Endothelial cell of umbilical vein (primary cell): ENCODE measurements at regions of chr9 and their contacts with region 1.

Region 1: GRCh38 chr9:38017149-38017884 is 51.7 kb downstream of the SHB start:
- DNase-seq: no peak
- H3K4me3 ChIP-seq: no peak overlapping the region
- H3K27ac ChIP-seq: peak overlapping the region; percentile 34
- H3K4me1 ChIP-seq: peaks cover 57% of the 10 kb centered on the region
- H3K27me3 ChIP-seq: no peaks in the 10 kb centered on the region
- CTCF ChIP-seq: peak in 1 of 2 donors; percentile 11
- POLR2A ChIP-seq: no peak

Region 2: DNA sequence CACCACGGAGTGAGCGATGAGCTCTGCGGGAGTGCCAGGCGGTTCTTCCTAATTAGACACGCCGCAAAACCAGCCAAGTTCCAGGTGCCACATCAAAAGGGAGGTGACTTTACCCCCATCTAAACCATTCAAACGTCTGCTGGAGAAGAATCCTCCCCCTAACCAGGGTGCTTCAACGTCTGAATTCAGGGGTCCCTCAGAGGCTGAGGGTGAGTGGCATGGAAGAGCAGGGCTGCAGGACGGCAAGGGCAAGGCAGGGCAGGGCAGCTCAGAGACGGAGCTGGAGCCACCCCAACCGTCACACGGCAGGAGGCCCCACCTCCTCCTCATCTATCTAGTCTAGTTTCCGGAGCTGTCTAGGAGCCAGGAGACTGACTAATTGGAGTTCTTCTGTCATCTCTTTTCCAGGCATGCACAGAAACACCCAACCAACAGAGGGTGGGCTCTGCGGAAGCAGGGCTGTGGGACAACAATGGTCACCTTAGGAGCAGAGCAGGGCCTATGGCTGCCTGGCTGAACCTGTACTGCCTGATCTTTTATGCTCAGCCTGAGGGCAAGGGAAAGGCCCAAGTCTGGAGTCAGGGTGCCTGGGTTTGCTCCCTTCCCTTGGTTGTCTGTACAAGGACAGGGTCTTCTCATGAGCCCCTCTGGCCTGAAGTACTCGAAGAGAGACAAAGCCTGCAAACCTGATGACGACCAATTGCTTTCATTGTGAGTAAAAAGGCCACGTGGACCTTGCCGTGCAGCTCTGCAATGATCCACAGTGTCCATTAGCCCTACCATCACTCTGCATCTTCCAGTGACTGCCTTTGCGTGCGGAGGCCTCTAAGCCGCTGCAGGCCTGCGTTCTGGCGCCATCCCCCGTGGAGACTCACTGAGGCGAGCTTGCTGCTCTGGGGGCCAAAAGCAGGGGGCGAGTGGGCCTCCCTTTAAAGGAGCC is 32.4 kb before region 1 on chr9:
- CTCF ChIA-PET with region 1: no interaction called
- POLR2A ChIA-PET with region 1: no interaction called
- dilution Hi-C with region 1: no loop called
- intact Hi-C with region 1: no loop called
- DNase-seq: no peak
- H3K4me3 ChIP-seq: no peak overlapping the region
- H3K27ac ChIP-seq: no peak overlapping the region
- H3K4me1 ChIP-seq: peaks cover 6% of the 10 kb centered on the region
- H3K27me3 ChIP-seq: no peaks in the 10 kb centered on the region
- CTCF ChIP-seq: no peak
- POLR2A ChIP-seq: no peak

Region 3: DNA sequence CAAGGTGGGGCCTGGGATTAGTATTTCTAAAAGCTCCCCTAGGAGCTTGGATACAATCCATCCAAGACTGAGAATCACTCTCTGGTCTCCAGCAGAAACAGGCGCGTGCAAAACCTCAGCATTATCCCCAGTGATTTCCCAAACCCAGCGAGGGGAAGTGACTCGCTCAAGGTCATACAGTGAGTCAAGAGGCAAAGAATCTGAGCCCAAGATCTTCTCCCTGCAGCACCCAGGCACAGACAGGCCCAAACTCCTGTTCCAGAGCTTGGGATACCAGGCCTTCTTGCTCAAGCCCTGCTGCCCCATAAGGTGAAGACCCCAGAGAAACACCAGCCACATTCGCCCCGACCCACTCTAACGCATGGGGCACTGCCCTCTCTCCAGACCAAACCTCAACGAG is 18.6 kb after region 1 on chr9:
- CTCF ChIA-PET with region 1: interaction called, 4 read pairs
- POLR2A ChIA-PET with region 1: no interaction called
- dilution Hi-C with region 1: no loop called
- intact Hi-C with region 1: loop called (anchors 2 kb)
- DNase-seq: peak; percentile 56
- H3K4me3 ChIP-seq: no peak overlapping the region
- H3K27ac ChIP-seq: peak overlapping the region; percentile 66
- H3K4me1 ChIP-seq: peaks cover 59% of the 10 kb centered on the region
- H3K27me3 ChIP-seq: no peaks in the 10 kb centered on the region
- CTCF ChIP-seq: no peak
- POLR2A ChIP-seq: no peak